AG04450 (cell line): ENCODE measurements at regions of chr12 and their contacts with region 1.

Region 1: GRCh38 chr12:108570743-108571608 is 8.6 kb downstream of the ISCU start:
- DNase-seq: no peak
- H3K4me3 ChIP-seq: no peak overlapping the region
- H3K27ac ChIP-seq: peak overlapping the region; percentile 21
- H3K27me3 ChIP-seq: no peaks in the 10 kb centered on the region
- CTCF ChIP-seq: peak; percentile 59

Region 2: DNA sequence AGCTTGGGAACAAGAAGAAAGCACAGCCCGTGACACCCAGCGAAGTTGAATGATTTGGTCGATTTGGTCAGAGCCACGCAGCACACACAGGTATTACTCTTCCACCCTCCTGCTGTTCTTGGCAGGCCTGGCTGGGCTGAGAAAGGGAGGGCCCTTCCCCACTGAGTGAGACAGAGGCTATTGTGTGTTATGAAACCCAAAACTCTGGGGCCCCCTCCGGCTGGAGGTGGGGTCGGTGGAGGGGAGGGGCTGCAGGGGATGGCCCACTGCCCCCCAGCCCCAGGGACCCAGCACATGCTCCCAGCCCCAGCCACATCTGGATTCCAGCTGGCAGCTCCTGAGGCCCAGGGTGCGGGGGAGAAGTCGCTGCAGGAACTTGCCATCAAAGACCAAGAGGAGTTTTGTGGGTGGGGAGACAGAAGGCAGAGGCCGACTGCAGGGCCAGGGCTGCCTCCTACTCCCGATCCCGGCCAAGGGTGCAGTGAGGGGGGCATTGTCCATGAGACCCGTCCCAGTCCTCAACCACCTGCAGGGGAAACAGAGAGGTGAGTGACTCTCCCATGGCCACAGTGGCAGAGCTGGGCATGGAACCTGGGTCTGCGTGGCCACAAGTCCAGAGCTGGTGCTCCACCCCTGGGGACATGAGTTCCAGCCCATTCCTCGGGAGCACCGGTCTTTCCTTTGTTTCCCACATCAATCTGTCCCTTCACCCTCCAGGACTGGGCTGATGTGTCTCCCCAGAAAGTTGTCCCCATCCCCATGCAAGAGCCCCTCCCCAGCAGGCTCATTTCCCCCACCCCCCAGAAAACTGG is 18.3 kb after region 1 on chr12:
- CTCF ChIA-PET with region 1: interaction called, 10 read pairs
- POLR2A ChIA-PET with region 1: no interaction called
- DNase-seq: no peak
- H3K4me3 ChIP-seq: no peak overlapping the region
- H3K27ac ChIP-seq: no peak overlapping the region
- H3K27me3 ChIP-seq: no peaks in the 10 kb centered on the region
- CTCF ChIP-seq: no peak